Activated T-helper 2 cell treated with anti-CD3 and anti-CD28 coated beads, Interferon-gamma antibody, Interleukin-2, Interleukin-4, amounts not matched to agents 10 μg/mL and 5 μg/mL and 100 μg/mL, durations not matched to agents 14 hours and 24 hours and 36 hours (primary cell): ENCODE measurements at regions of chr2 and their contacts with region 1.

Region 1: GRCh38 chr2:234544659-234545611 is 48.1 kb upstream of the ARL4C start:
- DNase-seq: peak; percentile 69
- H3K4me3 Mint-ChIP-seq: no peak overlapping the region
- H3K27ac Mint-ChIP-seq: no peak overlapping the region
- H3K4me1 Mint-ChIP-seq: no peaks in the 10 kb centered on the region
- H3K27me3 Mint-ChIP-seq: peaks cover 40% of the 10 kb centered on the region

Region 2: DNA sequence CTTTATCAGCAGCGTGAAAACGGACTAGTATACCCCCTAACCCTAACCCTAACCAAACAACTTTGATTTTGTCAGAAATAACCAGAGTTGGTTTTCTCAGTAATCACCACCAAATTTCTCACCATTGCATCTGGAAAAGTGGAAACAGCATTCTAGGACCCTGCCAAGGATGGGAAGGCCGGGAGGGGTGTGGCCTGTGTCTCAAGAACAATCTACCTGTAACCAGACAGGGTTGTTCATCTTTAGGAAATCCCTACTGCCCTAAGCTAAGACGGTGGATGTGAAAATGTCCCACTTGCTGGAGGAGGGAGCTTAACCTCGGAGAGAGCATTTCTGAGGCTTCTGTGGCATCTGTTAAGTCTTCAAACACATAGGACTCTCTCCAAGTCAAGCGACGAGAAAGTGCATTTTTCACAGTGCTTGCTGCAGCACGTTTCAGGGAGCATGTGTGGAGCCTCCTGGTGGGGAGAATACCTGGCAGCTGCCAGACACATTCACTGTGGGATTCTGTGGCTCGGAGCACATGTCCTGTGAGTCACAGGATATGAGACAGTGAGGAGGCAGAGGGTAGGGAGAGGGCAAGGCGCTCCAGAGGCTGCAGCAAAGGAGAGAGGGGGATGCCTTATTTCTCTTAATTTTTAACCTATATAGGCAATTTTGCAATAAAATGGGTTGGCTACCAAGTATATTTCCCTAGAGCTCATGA is 286.9 kb before region 1 on chr2:
- intact Hi-C with region 1: loop called (anchors 1 kb)
- DNase-seq: no peak
- H3K4me3 Mint-ChIP-seq: no peak overlapping the region
- H3K27ac Mint-ChIP-seq: peak overlapping the region; percentile 35
- H3K4me1 Mint-ChIP-seq: peaks cover 24% of the 10 kb centered on the region
- H3K27me3 Mint-ChIP-seq: no peaks in the 10 kb centered on the region

Region 3: GRCh38 chr2:234395891-234396420 is 149.0 kb before region 1 on chr2:
- intact Hi-C with region 1: no loop called
- DNase-seq: no peak
- H3K4me3 Mint-ChIP-seq: no peak overlapping the region
- H3K27ac Mint-ChIP-seq: no peak overlapping the region
- H3K4me1 Mint-ChIP-seq: peaks cover 61% of the 10 kb centered on the region
- H3K27me3 Mint-ChIP-seq: no peaks in the 10 kb centered on the region

Region 4: GRCh38 chr2:234500394-234501006 is 44.4 kb before region 1 on chr2:
- intact Hi-C with region 1: no loop called
- DNase-seq: peak; percentile 66
- H3K4me3 Mint-ChIP-seq: no peak overlapping the region
- H3K27ac Mint-ChIP-seq: no peak overlapping the region
- H3K4me1 Mint-ChIP-seq: peaks cover 31% of the 10 kb centered on the region
- H3K27me3 Mint-ChIP-seq: peaks cover 18% of the 10 kb centered on the region